Caco-2 (cell line): ENCODE measurements at regions of chr16 and their contacts with region 1.

Region 1: DNA sequence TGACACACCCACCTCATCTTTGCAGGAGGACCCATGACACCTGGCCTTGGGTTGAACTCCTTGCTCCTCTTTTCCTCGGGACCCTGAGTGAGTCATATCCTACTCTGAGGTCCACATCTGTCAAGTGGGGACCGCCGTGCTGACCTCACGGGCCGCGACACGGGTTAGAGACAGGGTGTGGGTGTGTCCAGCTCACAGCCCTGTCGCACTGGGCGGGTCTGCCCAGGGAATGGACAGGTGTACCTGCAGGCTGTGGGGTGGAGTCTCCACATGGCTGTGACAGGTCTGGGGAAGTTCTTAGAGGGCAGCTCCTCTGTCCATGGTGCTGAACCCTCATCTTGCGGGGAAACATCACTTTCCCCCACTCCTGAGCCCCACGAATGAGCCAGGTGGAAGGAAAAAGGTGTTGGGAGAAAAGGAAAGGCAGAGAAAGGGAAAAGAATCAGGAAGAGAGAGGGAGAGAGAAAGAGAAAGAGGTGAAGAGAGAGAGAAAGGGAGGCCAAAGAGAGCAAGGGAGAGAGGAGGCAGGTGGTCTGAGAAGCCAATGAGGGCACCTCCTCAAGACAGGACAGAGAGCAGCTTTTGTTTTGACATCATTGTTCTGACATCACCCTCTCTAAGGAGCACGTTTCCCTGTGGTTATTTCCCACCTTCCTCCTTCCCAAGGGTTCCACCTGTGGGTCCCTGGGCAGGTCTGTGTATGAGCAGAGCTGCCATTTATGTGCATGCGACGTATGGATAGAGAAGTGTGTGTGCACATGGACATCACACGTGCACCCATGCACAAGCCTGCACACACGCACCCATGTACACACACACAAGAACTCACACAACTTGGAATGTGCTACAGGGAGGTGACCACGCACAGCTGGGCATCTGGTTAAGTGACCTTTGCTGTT is 32.6 kb upstream of the CBFA2T3 start:
- DNase-seq: peak in 1 of 2 experiments; percentile 67
- H3K4me3 ChIP-seq: no peak overlapping the region
- H3K4me3 Mint-ChIP-seq: no peak overlapping the region
- H3K27ac Mint-ChIP-seq: no peak overlapping the region
- H3K4me1 ChIP-seq: no peaks in the 10 kb centered on the region
- H3K4me1 Mint-ChIP-seq: no peaks in the 10 kb centered on the region
- H3K27me3 ChIP-seq: no peaks in the 10 kb centered on the region
- H3K27me3 Mint-ChIP-seq: peaks cover 24% of the 10 kb centered on the region
- CTCF ChIP-seq: no peak

Region 2: DNA sequence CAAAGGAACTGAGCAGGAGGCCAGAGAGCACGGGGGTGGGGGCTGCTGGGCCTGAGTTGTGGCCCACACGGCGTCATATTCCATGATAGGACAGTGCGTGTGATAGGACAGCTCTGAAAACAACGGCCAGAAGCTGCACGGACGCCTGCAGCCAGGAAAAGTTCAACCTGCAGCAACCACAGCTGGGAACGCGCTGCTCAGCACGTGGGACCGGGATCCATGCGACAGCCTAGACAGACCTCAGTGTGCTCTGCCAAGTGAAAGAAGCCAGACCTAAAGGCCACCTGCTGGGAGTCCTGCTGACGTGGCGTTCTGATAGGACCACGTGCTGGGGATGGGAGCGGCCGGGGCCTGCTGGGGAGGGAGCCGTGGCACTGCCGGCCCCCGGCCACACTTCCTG is 281.7 kb before region 1 on chr16:
- CTCF ChIA-PET with region 1: no interaction called
- POLR2A ChIA-PET with region 1: no interaction called
- intact Hi-C with region 1: no loop called
- DNase-seq: no peak
- H3K4me3 ChIP-seq: no peak overlapping the region
- H3K4me3 Mint-ChIP-seq: no peak overlapping the region
- H3K27ac Mint-ChIP-seq: peak overlapping the region; percentile 42
- H3K4me1 ChIP-seq: no peaks in the 10 kb centered on the region
- H3K4me1 Mint-ChIP-seq: no peaks in the 10 kb centered on the region
- H3K27me3 ChIP-seq: no peaks in the 10 kb centered on the region
- H3K27me3 Mint-ChIP-seq: no peaks in the 10 kb centered on the region
- CTCF ChIP-seq: no peak

Region 3: GRCh38 chr16:88870608-88871348 is 138.8 kb before region 1 on chr16:
- CTCF ChIA-PET with region 1: no interaction called
- POLR2A ChIA-PET with region 1: no interaction called
- intact Hi-C with region 1: no loop called
- DNase-seq: no peak
- H3K4me3 ChIP-seq: no peak overlapping the region
- H3K4me3 Mint-ChIP-seq: no peak overlapping the region
- H3K27ac Mint-ChIP-seq: no peak overlapping the region
- H3K4me1 ChIP-seq: no peaks in the 10 kb centered on the region
- H3K4me1 Mint-ChIP-seq: no peaks in the 10 kb centered on the region
- H3K27me3 ChIP-seq: no peaks in the 10 kb centered on the region; the same call in 1 of the 2 replicates
- H3K27me3 Mint-ChIP-seq: peaks cover 6% of the 10 kb centered on the region
- CTCF ChIP-seq: no peak

Region 4: DNA sequence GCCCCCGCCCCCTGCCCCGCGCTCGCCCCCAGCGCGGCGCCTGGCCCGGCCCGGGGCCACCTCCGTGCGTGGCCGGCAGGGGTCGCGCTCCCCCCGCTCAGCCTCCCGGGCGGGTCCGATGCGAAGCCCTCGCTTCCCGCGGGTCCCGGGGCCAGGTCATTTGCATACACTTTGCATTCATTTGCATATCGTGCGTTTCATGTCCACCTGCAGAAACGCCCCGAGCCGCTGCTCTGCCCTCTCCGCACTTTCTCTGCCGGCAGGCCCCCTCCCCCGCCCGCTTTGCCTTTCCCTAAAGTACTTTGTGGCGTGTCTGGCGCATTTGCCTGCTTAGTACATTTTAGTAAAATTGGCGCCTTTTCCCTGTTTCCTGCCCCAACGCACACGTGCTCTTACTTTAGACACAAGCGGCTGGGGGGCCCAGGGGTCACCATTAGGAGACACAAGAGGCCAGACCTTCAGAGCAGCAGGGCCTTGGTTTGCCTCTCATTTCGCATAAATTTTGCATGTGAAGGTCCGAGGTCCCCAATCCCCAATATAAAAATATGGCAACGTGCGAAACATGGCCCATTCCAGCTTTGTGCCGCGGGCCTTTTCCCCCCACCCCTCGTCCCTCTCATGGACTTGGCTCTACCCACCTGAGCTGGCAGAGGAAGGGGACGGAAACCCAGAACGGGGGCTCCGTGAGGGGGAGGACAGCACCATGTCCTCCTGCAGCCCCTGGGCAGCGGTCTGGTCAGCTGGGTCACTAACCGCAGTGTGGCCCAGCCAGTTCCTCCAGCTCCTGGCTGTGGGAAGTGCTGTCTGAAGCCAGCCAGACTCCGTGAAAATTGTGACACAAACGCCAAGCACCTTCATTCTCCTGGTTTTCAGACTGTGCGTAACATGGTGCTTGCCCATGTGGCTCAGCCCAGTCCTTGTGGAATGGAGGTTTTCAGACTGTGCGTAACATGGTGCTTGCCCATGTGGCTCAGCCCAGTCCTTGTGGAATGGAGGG is 67.3 kb before region 1 on chr16:
- CTCF ChIA-PET with region 1: no interaction called
- POLR2A ChIA-PET with region 1: no interaction called
- intact Hi-C with region 1: loop called (anchors 10 kb)
- DNase-seq: peak in 1 of 2 experiments; percentile 71
- H3K4me3 ChIP-seq: no peak overlapping the region
- H3K4me3 Mint-ChIP-seq: peak overlapping the region; percentile 58
- H3K27ac Mint-ChIP-seq: no peak overlapping the region
- H3K4me1 ChIP-seq: peaks cover 4% of the 10 kb centered on the region; the same call in 1 of the 2 replicates
- H3K4me1 Mint-ChIP-seq: no peaks in the 10 kb centered on the region
- H3K27me3 ChIP-seq: no peaks in the 10 kb centered on the region; the same call in none of the 2 replicates
- H3K27me3 Mint-ChIP-seq: peaks cover 27% of the 10 kb centered on the region
- CTCF ChIP-seq: peak; percentile 39 to 69

Region 5: GRCh38 chr16:89037261-89038152 is 27.9 kb after region 1 on chr16:
- CTCF ChIA-PET with region 1: no interaction called
- POLR2A ChIA-PET with region 1: no interaction called
- intact Hi-C with region 1: loop called (anchors 1 kb)
- DNase-seq: peak in 1 of 2 experiments; percentile 82
- H3K4me3 ChIP-seq: no peak overlapping the region
- H3K4me3 Mint-ChIP-seq: no peak overlapping the region
- H3K27ac Mint-ChIP-seq: no peak overlapping the region
- H3K4me1 ChIP-seq: no peaks in the 10 kb centered on the region
- H3K4me1 Mint-ChIP-seq: no peaks in the 10 kb centered on the region
- H3K27me3 ChIP-seq: no peaks in the 10 kb centered on the region; the same call in none of the 2 replicates
- H3K27me3 Mint-ChIP-seq: peaks cover 45% of the 10 kb centered on the region
- CTCF ChIP-seq: no peak